AG04450 (cell line): ENCODE measurements at regions of chr1 and their contacts with region 1.

Region 1: DNA sequence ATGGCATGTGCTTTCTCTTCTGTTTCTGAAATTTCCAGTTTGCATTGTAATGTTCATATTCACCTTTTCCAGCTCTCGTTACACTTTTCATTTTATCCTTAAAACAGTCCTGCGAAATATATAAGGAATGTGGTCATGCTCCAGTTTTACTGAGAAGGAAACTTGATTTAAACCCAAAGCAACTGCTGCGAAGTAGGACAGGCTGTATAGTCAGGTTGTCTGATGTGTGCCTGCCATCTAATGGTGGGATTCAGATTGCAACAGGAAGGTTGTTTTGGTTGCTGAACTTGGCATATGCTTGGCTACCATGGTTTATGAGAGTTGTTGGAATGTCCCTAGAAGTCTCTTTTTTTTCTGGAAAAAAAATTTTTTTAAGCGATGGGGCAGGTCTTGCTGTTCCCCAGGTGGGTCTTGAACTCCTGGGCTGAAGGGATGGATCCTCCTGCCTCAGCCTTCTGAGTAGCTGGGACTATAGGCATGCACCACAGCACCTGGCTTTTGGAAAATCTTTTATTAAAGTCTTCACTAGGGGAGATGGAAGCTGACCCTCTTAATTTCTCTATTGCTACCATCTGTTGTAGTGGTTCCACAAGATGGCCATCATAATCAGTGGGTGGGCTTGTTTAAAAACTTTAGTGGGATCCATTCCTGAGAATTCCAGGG is 86.9 kb downstream of the UCK2 start:
- DNase-seq: peak; percentile 67
- H3K4me3 ChIP-seq: no peak overlapping the region
- H3K27ac ChIP-seq: no peak overlapping the region
- H3K27me3 ChIP-seq: no peaks in the 10 kb centered on the region
- CTCF ChIP-seq: peak; percentile 93

Region 2: DNA sequence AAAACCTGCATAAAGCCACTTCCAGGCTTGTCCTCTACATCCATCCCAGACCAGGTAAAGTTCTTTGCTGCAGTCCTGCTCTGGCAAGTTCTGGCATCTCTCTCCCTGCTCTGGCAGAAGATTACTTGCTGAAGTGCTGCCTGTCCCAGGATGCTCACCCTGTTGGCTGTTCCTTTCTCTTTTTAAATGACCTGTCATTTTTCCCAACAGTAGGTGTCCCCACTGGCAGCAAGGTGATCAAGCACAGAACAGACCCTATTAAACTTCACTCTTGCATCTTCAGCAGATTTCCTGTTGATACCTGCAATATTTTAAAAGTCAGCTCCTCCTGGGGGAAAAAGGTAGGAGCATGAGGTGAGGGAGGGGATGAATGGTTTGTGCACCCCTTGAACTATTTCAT is 1022.7 kb before region 1 on chr1:
- CTCF ChIA-PET with region 1: no interaction called
- POLR2A ChIA-PET with region 1: no interaction called
- DNase-seq: no peak
- H3K4me3 ChIP-seq: no peak overlapping the region
- H3K27ac ChIP-seq: no peak overlapping the region
- H3K27me3 ChIP-seq: peaks cover 2% of the 10 kb centered on the region
- CTCF ChIP-seq: no peak

Region 3: GRCh38 chr1:165597883-165598675 is 316.2 kb before region 1 on chr1:
- CTCF ChIA-PET with region 1: interaction called, 65 read pairs
- POLR2A ChIA-PET with region 1: no interaction called
- DNase-seq: peak; percentile 94
- H3K4me3 ChIP-seq: peak overlapping the region; percentile 69
- H3K27ac ChIP-seq: peak overlapping the region; percentile 92
- H3K27me3 ChIP-seq: peaks cover 14% of the 10 kb centered on the region
- CTCF ChIP-seq: no peak

Region 4: GRCh38 chr1:165717918-165718515 is 196.2 kb before region 1 on chr1:
- CTCF ChIA-PET with region 1: interaction called, 37 read pairs
- POLR2A ChIA-PET with region 1: no interaction called
- DNase-seq: peak; percentile 33
- H3K4me3 ChIP-seq: no peak overlapping the region
- H3K27ac ChIP-seq: no peak overlapping the region
- H3K27me3 ChIP-seq: no peaks in the 10 kb centered on the region
- CTCF ChIP-seq: peak; percentile 95

Region 5: GRCh38 chr1:165738794-165739193 is 175.5 kb before region 1 on chr1:
- CTCF ChIA-PET with region 1: interaction called, 22 read pairs
- POLR2A ChIA-PET with region 1: no interaction called
- DNase-seq: no peak
- H3K4me3 ChIP-seq: no peak overlapping the region
- H3K27ac ChIP-seq: no peak overlapping the region
- H3K27me3 ChIP-seq: no peaks in the 10 kb centered on the region
- CTCF ChIP-seq: no peak

Region 6: GRCh38 chr1:165768513-165769394 is 145.5 kb before region 1 on chr1 and contains the start of gene TMCO1:
- CTCF ChIA-PET with region 1: interaction called, 24 read pairs
- POLR2A ChIA-PET with region 1: interaction called, 4 read pairs
- DNase-seq: peak; percentile 97
- H3K4me3 ChIP-seq: peak within 1 kb of the TSS; percentile 88
- H3K27ac ChIP-seq: peak within 1 kb of the TSS; percentile 94
- H3K27me3 ChIP-seq: no peaks in the 10 kb centered on the region
- CTCF ChIP-seq: peak; percentile 36
- polyA plus RNA-seq, gene TMCO1: 188 and 200 TPM in 2 replicates

Region 7: GRCh38 chr1:165898837-165899236 is 15.4 kb before region 1 on chr1:
- CTCF ChIA-PET with region 1: interaction called, 60 read pairs
- POLR2A ChIA-PET with region 1: interaction called, 7 read pairs
- DNase-seq: peak; percentile 98
- H3K4me3 ChIP-seq: no peak overlapping the region
- H3K27ac ChIP-seq: peak overlapping the region; percentile 100
- H3K27me3 ChIP-seq: no peaks in the 10 kb centered on the region
- CTCF ChIP-seq: 0 out of 2 replicates have a peak, but pooled peaks have one; percentile 1

Region 8: GRCh38 chr1:166202546-166202945 is 288.3 kb after region 1 on chr1:
- CTCF ChIA-PET with region 1: no interaction called
- POLR2A ChIA-PET with region 1: no interaction called
- DNase-seq: no peak
- H3K4me3 ChIP-seq: no peak overlapping the region
- H3K27ac ChIP-seq: no peak overlapping the region
- H3K27me3 ChIP-seq: no peaks in the 10 kb centered on the region
- CTCF ChIP-seq: no peak